Naive thymus-derived CD4-positive, alpha-beta T cell (primary cell): ENCODE measurements at regions of chr5 and their contacts with region 1.

Region 1: GRCh38 chr5:132426525-132427138 is 57.1 kb downstream of the SLC22A5 start:
- DNase-seq: peak in 3 of 9 donors; percentile 26 to 71 (median 29)
- ATAC-seq: peak; percentile 63
- H3K4me3 ChIP-seq: peak overlapping the region; percentile 41
- H3K4me3 Mint-ChIP-seq: peak overlapping the region; percentile 60 to 92 (median 75)
- H3K27ac ChIP-seq: peak overlapping the region; percentile 83
- H3K27ac Mint-ChIP-seq: peak overlapping the region; percentile 88 to 99 (median 97)
- H3K4me1 ChIP-seq: peaks cover 97 to 98% of the 10 kb centered on the region in 2 donors
- H3K4me1 Mint-ChIP-seq: peaks cover 78 to 98% (median 97%) of the 10 kb centered on the region in 7 donors
- H3K27me3 ChIP-seq: no peaks in the 10 kb centered on the region
- H3K27me3 Mint-ChIP-seq: no peaks in the 10 kb centered on the region

Region 2: GRCh38 chr5:132238169-132238744 is 188.4 kb before region 1 on chr5:
- CTCF ChIA-PET with region 1: no interaction called
- POLR2A ChIA-PET with region 1: no interaction called
- intact Hi-C with region 1: no loop called
- DNase-seq: peak in 8 of 9 donors; percentile 34 to 76 (median 44)
- ATAC-seq: peak; percentile 70
- H3K4me3 ChIP-seq: no peak overlapping the region
- H3K4me3 Mint-ChIP-seq: no peak overlapping the region
- H3K27ac ChIP-seq: no peak overlapping the region
- H3K27ac Mint-ChIP-seq: no peak overlapping the region
- H3K4me1 ChIP-seq: no peaks in the 10 kb centered on the region
- H3K4me1 Mint-ChIP-seq: peaks cover 0 to 2% (median 0%) of the 10 kb centered on the region in 7 donors
- H3K27me3 ChIP-seq: no peaks in the 10 kb centered on the region
- H3K27me3 Mint-ChIP-seq: peaks cover 0 to 21% (median 4%) of the 10 kb centered on the region in 5 donors

Region 3: DNA sequence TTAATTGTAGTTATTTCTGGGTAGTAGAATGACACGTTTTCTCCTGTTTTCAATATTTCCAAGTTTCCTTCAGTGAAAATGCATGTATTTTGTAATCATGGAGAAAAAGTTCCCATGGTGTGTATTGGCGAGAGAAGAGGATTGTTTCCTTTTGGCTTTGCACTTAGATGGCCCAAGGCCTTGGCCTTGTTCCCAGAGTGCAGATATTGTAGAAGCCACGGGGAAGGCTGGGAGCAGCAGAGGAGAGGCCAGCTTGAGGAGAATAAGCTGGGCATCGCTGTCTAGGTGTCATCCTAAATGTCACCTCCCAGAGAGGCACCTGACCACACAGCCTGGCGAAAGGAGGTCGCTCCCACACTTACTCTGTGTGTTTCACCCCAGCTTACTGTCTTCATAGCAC is 20.0 kb after region 1 on chr5:
- CTCF ChIA-PET with region 1: interaction called, 7 read pairs
- POLR2A ChIA-PET with region 1: interaction called, 12 read pairs
- intact Hi-C with region 1: no loop called
- DNase-seq: no peak
- ATAC-seq: no peak
- H3K4me3 ChIP-seq: peak overlapping the region; percentile 3
- H3K4me3 Mint-ChIP-seq: peak overlapping the region in 8 of 10 donors; percentile 30 to 71 (median 61)
- H3K27ac ChIP-seq: no peak overlapping the region
- H3K27ac Mint-ChIP-seq: peak overlapping the region in 8 of 9 donors; percentile 64 to 94 (median 79)
- H3K4me1 ChIP-seq: peaks cover 54 to 76% of the 10 kb centered on the region in 2 donors
- H3K4me1 Mint-ChIP-seq: peaks cover 52 to 93% (median 76%) of the 10 kb centered on the region in 7 donors
- H3K27me3 ChIP-seq: no peaks in the 10 kb centered on the region
- H3K27me3 Mint-ChIP-seq: no peaks in the 10 kb centered on the region

Region 4: DNA sequence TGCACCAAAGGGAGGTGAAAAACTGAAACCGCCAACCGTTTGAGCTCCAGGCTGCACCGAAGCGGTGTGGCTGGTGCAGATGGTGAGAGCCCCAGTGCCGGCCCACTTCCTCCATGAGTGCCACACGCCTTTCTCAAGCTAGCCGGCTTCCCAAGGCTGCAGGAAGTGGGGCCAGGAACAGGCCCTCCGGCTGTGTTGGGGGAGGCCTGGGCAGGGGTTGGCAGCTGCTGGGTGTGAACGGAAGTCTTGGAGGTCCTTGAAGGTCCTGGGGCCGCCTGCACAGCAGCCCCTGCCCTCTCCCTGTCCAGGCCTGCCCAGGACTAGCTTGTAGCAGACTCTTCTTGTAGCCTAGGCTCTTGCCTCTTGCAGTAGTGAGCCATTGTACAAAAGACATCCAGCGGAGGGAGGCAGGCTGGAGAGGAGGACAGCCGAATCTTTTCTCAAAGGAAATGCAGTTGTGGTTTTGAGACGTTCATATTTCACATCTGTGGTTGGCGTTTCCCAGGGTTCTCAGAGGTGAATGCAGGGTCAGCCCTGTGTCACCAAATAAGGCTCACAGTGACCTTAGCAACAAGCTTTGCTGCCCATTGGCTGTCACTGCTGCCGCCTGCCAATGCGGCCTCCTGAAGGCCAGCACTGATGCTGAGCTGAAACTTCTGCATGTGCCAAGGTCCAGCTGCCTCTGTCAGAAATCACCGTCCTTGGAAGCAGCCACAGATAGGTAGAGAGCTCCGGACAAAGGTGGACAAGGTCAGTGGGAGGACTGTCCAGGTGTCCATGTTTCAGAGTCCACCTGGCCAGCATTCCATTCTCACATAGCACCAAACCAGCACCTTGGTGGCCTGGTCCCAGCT is 40.0 kb after region 1 on chr5:
- CTCF ChIA-PET with region 1: interaction called, 25 read pairs
- POLR2A ChIA-PET with region 1: interaction called, 150 read pairs
- intact Hi-C with region 1: loop called (anchors 1 to 2 kb)
- DNase-seq: peak in 8 of 9 donors; percentile 58 to 76 (median 72)
- ATAC-seq: peak; percentile 81
- H3K4me3 ChIP-seq: peak overlapping the region; percentile 57
- H3K4me3 Mint-ChIP-seq: peak overlapping the region; percentile 72 to 87 (median 78)
- H3K27ac ChIP-seq: peak overlapping the region; percentile 69
- H3K27ac Mint-ChIP-seq: peak overlapping the region; percentile 83 to 95 (median 94)
- H3K4me1 ChIP-seq: peaks cover 71 to 93% of the 10 kb centered on the region in 2 donors
- H3K4me1 Mint-ChIP-seq: peaks cover 58 to 98% (median 97%) of the 10 kb centered on the region in 7 donors
- H3K27me3 ChIP-seq: no peaks in the 10 kb centered on the region
- H3K27me3 Mint-ChIP-seq: no peaks in the 10 kb centered on the region

Region 5: DNA sequence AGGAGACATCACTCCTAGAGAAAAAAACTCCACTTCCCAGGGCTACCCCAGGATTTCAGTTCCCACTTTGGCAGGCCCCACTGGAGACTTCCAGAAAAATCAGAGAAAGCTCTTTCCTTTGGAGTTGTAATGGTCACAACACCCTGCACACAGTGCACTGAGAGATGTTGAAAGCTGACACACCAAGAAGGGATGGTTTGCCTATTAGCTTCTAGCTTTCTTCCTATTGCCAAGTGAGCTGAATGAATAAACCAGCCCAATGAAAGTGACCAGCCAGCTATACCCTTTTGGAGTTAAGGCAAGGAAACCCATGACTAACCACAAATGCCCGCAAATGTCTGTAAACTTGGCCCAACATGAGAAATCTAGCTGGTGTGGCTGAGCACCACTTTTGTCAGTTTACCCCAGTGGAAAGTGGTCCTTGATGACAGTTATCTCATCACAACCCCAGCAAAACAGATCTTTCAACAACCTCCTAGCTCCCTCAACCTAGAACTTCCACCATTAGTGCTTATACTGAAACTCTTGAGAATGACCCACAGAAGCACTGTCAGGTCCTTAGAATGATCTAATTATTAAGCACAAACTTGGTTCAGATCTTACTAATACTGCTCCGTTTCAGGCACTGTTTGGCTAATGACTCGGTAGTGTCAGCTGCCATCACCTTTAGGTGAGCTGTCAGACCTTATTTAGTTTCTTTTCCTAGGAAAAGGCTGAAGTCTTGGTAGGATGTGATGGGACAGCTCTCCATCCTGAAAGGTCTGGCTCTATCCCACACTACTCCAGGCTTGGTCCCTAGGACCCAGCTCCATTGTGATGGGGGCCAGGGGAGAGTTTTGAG is 52.7 kb after region 1 on chr5:
- CTCF ChIA-PET with region 1: interaction called, 8 read pairs
- POLR2A ChIA-PET with region 1: interaction called, 21 read pairs
- intact Hi-C with region 1: no loop called
- DNase-seq: peak in 3 of 9 donors; percentile 12 to 31 (median 29)
- ATAC-seq: no peak
- H3K4me3 ChIP-seq: no peak overlapping the region
- H3K4me3 Mint-ChIP-seq: peak overlapping the region in 4 of 10 donors; percentile 13 to 42 (median 22)
- H3K27ac ChIP-seq: peak overlapping the region; percentile 47
- H3K27ac Mint-ChIP-seq: peak overlapping the region; percentile 85 to 97 (median 92)
- H3K4me1 ChIP-seq: peaks cover 10 to 84% of the 10 kb centered on the region in 2 donors
- H3K4me1 Mint-ChIP-seq: peaks cover 33 to 78% (median 70%) of the 10 kb centered on the region in 7 donors
- H3K27me3 ChIP-seq: no peaks in the 10 kb centered on the region
- H3K27me3 Mint-ChIP-seq: no peaks in the 10 kb centered on the region

Region 6: DNA sequence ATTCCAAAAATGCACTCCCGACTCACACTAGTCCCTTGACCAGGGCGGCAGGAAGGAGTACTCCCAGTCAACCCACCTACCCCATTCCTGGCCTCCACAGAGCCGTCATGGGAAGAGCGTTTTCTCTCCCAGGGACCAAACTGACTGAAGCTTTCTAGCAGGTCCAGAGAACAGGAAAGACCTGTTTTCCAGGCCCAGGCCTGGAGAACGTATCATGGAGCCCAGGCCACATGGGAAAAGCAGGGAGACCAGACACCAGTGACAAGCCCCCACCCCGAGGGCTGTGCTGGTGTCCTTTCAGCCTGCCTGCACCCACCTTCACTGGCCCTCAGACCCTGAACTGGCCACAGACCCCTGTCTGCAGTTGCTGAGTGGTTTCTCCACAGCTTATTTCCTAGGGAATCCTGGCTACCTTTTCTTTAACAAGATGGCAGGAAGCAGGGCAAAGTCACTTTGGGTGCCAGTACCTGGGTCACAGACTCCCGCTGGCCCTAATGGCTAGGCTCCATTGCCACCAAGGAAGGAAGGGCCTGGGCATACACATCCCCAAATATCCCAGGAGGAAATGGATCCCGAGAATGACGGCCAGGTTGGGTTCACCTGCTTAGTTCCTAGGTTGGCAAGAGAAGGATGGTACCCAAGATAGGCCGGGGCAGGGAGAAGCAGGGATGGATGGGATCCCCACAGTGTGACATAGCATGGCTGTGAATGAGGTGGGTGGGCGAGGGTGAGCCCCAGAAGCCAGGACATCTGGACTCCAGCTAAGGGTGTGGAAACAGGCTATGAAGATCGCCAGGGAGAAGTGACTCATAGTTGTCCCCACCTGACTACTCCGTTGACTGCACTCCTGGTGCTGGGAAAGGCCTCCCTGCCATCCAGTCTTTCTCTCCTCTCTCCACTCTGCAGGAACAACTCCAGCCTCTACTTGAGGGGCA is 332.7 kb after region 1 on chr5:
- CTCF ChIA-PET with region 1: no interaction called
- POLR2A ChIA-PET with region 1: no interaction called
- intact Hi-C with region 1: no loop called
- DNase-seq: peak in 1 of 9 donors; percentile 16
- ATAC-seq: no peak
- H3K4me3 ChIP-seq: no peak overlapping the region
- H3K4me3 Mint-ChIP-seq: no peak overlapping the region
- H3K27ac ChIP-seq: no peak overlapping the region
- H3K27ac Mint-ChIP-seq: no peak overlapping the region
- H3K4me1 ChIP-seq: no peaks in the 10 kb centered on the region
- H3K4me1 Mint-ChIP-seq: peaks cover 0 to 14% (median 0%) of the 10 kb centered on the region in 7 donors
- H3K27me3 ChIP-seq: no peaks in the 10 kb centered on the region
- H3K27me3 Mint-ChIP-seq: no peaks in the 10 kb centered on the region

Region 7: DNA sequence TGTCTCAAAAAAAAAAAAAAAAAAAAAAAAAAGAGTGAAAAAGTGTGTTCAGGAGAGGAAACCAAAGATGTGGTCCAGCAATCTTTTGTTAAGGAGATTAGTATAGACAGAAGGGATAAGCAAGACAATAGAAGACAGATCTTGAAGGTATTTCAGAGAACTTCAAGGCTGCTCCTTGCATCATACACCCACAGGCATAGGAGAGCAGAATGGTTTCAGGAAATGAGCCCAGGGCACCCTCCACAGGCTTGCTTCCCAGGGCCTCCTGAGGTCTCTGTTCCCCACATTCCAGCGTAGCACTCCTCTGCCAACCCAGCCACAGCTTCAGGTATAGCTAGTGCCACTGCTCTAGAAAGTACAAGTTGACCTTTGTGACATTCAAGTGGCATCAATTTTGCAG is 1119.9 kb after region 1 on chr5:
- CTCF ChIA-PET with region 1: no interaction called
- POLR2A ChIA-PET with region 1: no interaction called
- intact Hi-C with region 1: no loop called
- DNase-seq: no peak
- ATAC-seq: no peak
- H3K4me3 ChIP-seq: no peak overlapping the region
- H3K4me3 Mint-ChIP-seq: no peak overlapping the region
- H3K27ac ChIP-seq: no peak overlapping the region
- H3K27ac Mint-ChIP-seq: no peak overlapping the region
- H3K4me1 ChIP-seq: no peaks in the 10 kb centered on the region
- H3K4me1 Mint-ChIP-seq: no peaks in the 10 kb centered on the region
- H3K27me3 ChIP-seq: peaks cover 3 to 5% of the 10 kb centered on the region in 2 donors
- H3K27me3 Mint-ChIP-seq: peaks cover 38 to 61% (median 48%) of the 10 kb centered on the region in 5 donors